ENCODE measurements at regions of chr6 and their contacts with region 1.

Region 1: DNA sequence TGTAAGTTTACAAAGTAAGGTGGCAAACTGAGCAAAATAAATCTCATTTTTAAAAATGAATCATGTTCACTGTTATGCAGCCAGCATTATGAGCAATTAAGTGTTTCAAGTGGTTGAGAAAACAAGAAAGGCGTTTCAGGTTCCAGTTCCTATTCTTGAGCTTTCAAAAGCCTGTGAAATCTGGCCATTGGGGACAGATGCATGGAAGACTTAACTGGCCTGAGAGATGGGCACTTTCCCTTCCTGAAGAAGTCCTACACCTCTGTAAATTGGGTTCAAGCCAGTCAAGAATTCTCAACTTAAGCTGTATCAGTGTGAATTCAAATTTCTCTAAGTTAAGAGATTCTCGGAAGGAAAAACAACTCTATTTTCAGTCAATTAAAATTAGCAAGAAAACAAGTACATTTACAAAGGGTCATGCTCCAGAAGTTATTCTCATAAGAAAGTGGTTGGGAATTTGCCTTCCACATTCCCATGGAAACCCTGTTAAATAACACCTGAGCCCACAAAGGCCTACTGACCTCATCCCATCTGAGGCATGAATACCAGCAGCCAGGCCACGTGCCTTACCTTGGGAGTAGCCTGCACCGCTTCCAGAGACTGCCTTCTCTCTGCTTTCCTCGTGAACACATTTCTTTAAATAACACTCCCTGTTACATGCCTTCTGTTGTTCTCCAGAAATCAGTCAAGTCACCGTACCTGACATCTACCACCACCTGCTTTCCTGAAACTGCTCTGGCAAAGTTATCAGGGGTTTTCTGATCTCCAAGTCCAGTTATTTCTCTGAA is 19.4 kb downstream of the MAP3K5 start:
- DNase-seq: no peak
- H3K4me3 Mint-ChIP-seq: no peak overlapping the region
- H3K27ac Mint-ChIP-seq: peak overlapping the region; percentile 45
- H3K4me1 Mint-ChIP-seq: peaks cover 53% of the 10 kb centered on the region
- H3K27me3 Mint-ChIP-seq: no peaks in the 10 kb centered on the region

Region 2: GRCh38 chr6:136761227-136761922 is 11.5 kb before region 1 on chr6:
- CTCF ChIA-PET with region 1: no interaction called
- POLR2A ChIA-PET with region 1: interaction called, 6 read pairs
- intact Hi-C with region 1: loop called (anchors 1 kb)
- DNase-seq: no peak
- H3K4me3 Mint-ChIP-seq: peak overlapping the region; percentile 36
- H3K27ac Mint-ChIP-seq: peak overlapping the region; percentile 63
- H3K4me1 Mint-ChIP-seq: peaks cover 66% of the 10 kb centered on the region
- H3K27me3 Mint-ChIP-seq: no peaks in the 10 kb centered on the region

Region 3: GRCh38 chr6:136783495-136784270 is 10.8 kb after region 1 on chr6:
- CTCF ChIA-PET with region 1: interaction called, 3 read pairs
- POLR2A ChIA-PET with region 1: interaction called, 15 read pairs
- intact Hi-C with region 1: loop called (anchors 1 kb)
- DNase-seq: no peak
- H3K4me3 Mint-ChIP-seq: peak overlapping the region; percentile 50
- H3K27ac Mint-ChIP-seq: peak overlapping the region; percentile 65
- H3K4me1 Mint-ChIP-seq: peaks cover 78% of the 10 kb centered on the region
- H3K27me3 Mint-ChIP-seq: no peaks in the 10 kb centered on the region

Region 4: GRCh38 chr6:136811272-136811671 is 38.4 kb after region 1 on chr6:
- CTCF ChIA-PET with region 1: no interaction called
- POLR2A ChIA-PET with region 1: no interaction called
- intact Hi-C with region 1: no loop called
- DNase-seq: no peak
- H3K4me3 Mint-ChIP-seq: no peak overlapping the region
- H3K27ac Mint-ChIP-seq: no peak overlapping the region
- H3K4me1 Mint-ChIP-seq: no peaks in the 10 kb centered on the region
- H3K27me3 Mint-ChIP-seq: no peaks in the 10 kb centered on the region

Region 5: GRCh38 chr6:137013738-137014602 is 241.1 kb after region 1 on chr6:
- CTCF ChIA-PET with region 1: no interaction called
- POLR2A ChIA-PET with region 1: no interaction called
- intact Hi-C with region 1: no loop called
- DNase-seq: no peak
- H3K4me3 Mint-ChIP-seq: no peak overlapping the region
- H3K27ac Mint-ChIP-seq: no peak overlapping the region
- H3K4me1 Mint-ChIP-seq: no peaks in the 10 kb centered on the region
- H3K27me3 Mint-ChIP-seq: peaks cover 44% of the 10 kb centered on the region